Activated T-helper 1 cell treated with anti-CD3 and anti-CD28 coated beads, Interleukin-12 subunit alpha, Interleukin-12 subunit beta, Interleukin-2, Interleukin-4 antibody, amounts not matched to agents 30 ng/mL and 10 ng/mL and 1 ng/mL, durations not matched to agents 14 hours and 24 hours and 36 hours (primary cell): ENCODE measurements at regions of chr15 and their contacts with region 1.

Region 1: DNA sequence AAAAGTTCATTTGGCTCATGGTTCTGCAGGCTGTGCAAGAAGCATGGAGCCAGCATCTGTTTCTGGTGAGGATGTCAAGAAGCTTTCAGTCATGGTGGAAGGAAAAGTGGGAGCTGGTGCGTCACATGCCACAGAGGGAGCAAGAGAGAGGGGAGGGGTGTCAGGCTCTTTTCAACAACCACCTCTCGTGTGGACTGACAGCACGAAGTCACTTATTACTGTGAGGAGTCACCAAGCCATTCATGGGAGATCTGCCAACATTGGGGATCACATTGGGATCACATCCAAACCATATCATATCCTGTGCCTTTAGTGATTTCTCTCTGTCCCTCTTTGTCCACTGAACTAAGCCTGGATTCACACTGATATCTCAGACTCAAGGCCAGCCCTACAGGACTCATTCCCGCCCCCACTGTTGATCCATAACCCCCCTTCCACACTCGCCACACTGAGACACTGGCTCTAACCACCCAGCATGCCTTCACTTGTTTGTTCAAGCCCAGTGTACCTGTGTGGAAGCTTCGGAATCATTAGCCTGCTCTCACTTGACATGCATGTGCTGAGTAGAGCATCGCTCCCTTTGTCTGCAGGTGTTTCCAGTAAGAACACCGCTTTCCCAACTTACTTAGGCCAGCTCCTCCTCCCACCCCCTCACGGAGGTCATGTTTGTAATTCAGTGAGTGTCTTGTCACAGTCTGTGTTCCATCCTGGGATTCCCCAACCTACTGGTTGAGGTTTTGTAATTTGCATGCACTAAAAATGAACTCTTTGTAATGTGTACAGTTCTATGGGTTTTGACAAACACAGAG is 132.2 kb downstream of the KLF13 start:
- DNase-seq: peak; percentile 57
- H3K4me3 Mint-ChIP-seq: peak overlapping the region; percentile 53
- H3K27ac Mint-ChIP-seq: peak overlapping the region; percentile 86
- H3K4me1 Mint-ChIP-seq: peaks cover 38% of the 10 kb centered on the region
- H3K27me3 Mint-ChIP-seq: no peaks in the 10 kb centered on the region

Region 2: DNA sequence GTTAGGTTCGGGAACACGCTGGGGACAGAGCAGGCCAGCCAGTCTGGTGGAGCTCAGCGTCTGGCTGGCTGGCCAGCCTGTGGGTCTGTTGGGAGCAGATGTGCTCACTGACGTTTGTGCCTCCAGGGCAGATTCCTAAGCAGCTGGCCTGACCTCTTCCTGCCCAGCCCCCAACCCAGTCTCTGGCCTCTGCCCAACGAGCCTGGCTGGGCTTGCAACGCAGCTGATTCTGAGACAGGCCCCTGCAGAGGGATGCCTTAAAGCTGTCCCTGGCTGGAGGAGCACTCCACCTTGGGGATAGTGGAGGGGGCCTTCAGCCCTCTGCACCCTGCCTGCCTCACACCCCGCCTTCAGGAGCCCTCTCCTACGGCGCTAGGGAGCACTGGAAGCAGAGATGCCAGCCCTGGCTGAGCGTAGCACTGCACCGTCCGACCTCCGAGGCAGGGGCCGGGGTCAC is 86.1 kb before region 1 on chr15:
- intact Hi-C with region 1: no loop called
- DNase-seq: no peak
- H3K4me3 Mint-ChIP-seq: no peak overlapping the region
- H3K27ac Mint-ChIP-seq: no peak overlapping the region
- H3K4me1 Mint-ChIP-seq: peaks cover 53% of the 10 kb centered on the region
- H3K27me3 Mint-ChIP-seq: no peaks in the 10 kb centered on the region

Region 3: DNA sequence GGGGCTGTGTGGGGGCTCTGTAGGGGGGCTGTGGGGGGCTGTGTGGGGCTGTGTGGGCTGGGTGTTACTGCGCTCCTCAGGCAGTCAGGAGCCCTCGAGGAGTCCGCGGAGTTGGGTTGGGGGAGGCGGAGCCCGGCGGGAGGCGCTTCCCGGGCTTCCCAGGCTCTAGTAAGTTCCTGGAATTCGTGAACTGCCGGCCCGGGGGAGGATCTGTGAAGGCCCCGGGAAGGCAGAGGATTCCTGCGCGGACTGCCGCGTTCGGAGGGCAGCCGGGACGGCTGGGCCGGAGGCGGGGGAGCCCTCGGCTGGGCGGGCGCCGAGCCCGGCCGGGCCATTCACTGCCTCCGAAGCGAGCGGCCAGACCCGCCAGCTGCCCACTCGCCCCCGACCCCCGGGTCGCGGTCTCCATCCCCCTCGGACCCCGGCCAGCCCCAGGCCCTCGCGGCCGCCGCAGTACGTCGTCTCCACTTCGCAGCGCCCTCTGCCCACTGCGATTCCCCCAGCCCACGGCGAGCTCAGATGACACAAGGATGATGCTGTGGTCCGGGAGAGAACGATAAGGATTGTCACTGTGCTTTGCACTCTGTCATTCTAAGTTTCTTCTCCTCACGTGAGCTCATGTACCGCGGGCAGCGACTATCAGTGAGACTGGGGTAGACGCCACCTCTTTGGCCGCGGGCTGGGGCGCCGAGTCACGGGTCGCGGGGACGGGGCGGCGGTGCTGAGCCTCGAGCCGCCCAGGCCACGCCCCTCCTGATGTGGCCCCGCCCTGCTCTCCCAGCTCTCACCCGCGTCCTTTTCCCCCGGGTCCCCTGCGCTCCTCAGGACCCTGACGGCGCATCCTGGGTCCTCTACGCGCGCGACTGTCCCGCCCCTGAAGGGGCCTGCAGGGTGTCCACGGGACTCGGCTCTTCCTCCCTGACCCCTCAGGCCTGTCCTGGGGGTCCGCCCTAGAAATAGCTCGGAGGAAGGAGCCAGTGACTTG is 66.8 kb before region 1 on chr15:
- intact Hi-C with region 1: loop called (anchors 1 kb)
- DNase-seq: peak; percentile 78
- H3K4me3 Mint-ChIP-seq: peak overlapping the region; percentile 86
- H3K27ac Mint-ChIP-seq: peak overlapping the region; percentile 90
- H3K4me1 Mint-ChIP-seq: peaks cover 37% of the 10 kb centered on the region
- H3K27me3 Mint-ChIP-seq: no peaks in the 10 kb centered on the region

Region 4: DNA sequence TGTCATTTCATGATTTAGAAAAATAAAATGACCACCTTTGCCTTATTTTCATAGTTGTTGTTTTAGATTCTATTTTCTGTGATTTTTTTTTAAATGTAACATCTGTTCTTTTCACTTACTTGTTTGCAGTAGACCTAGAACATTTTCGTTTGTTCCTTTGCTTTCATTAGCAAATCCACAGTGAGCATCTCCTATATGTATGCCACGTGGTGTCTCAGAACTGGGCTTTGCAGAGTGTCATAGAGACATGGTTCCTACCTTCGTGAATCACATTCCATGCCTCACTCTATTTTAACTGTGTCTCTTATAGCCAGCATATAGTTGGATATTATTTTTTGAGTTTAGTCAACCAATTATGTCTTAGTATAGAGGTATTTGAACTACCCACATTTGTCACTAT is 14.0 kb before region 1 on chr15:
- intact Hi-C with region 1: loop called (anchors 1 kb)
- DNase-seq: no peak
- H3K4me3 Mint-ChIP-seq: no peak overlapping the region
- H3K27ac Mint-ChIP-seq: peak overlapping the region; percentile 36
- H3K4me1 Mint-ChIP-seq: peaks cover 44% of the 10 kb centered on the region
- H3K27me3 Mint-ChIP-seq: peaks cover 2% of the 10 kb centered on the region

Region 5: GRCh38 chr15:31472636-31473384 is 14.0 kb after region 1 on chr15:
- intact Hi-C with region 1: loop called (anchors 1 kb)
- DNase-seq: peak; percentile 68
- H3K4me3 Mint-ChIP-seq: peak overlapping the region; percentile 76
- H3K27ac Mint-ChIP-seq: peak overlapping the region; percentile 90
- H3K4me1 Mint-ChIP-seq: peaks cover 59% of the 10 kb centered on the region
- H3K27me3 Mint-ChIP-seq: no peaks in the 10 kb centered on the region

Region 6: DNA sequence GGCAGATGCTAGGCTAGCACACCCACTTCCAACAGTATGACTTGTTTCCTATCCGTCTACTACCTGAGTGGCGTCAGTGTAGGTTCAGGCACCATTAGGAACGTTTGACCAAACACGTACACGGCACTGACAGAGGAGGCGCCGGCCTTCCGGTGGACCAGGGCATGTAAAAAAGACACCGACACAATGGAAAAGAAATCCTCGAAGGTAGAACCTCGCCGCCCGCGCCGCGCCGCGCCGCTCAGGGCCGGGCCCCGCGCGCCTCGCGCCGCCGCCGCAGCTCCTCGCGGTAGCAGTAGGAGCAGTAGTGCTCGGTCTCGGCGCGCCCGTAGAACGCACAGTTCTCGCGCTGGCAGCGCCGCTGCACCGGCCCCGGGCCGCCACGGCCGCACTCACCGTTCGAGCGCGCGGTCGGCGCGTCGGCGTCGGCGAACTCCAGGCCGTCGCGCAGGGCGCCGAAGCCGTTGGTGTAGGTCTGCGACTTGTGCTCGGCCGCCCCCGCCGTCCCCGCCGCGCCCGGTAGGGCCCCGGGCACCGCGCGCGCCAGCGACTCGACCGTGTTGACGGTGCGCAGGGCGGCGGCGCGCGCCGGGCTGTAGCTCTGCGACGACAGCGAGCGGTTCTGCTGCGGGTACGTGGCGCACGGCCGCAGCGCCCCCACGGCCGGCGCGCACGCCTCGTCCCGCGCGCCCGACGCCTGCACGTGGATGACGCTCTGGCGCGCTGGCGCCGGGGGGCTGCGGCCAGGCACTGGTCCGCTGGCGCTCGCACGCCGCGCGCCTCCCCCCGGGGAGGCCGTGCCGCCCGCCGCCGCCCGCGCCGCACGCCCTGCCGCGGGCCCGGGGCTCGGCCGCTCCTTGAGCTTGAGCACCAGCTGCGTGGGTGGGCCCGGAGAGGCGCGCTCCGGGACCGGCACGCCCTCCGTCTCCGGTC is 24.5 kb after region 1 on chr15:
- intact Hi-C with region 1: loop called (anchors 1 kb)
- DNase-seq: peak; percentile 42
- H3K4me3 Mint-ChIP-seq: peak overlapping the region; percentile 92
- H3K27ac Mint-ChIP-seq: peak overlapping the region; percentile 99
- H3K4me1 Mint-ChIP-seq: peaks cover 64% of the 10 kb centered on the region
- H3K27me3 Mint-ChIP-seq: peaks cover 2% of the 10 kb centered on the region

Region 7: DNA sequence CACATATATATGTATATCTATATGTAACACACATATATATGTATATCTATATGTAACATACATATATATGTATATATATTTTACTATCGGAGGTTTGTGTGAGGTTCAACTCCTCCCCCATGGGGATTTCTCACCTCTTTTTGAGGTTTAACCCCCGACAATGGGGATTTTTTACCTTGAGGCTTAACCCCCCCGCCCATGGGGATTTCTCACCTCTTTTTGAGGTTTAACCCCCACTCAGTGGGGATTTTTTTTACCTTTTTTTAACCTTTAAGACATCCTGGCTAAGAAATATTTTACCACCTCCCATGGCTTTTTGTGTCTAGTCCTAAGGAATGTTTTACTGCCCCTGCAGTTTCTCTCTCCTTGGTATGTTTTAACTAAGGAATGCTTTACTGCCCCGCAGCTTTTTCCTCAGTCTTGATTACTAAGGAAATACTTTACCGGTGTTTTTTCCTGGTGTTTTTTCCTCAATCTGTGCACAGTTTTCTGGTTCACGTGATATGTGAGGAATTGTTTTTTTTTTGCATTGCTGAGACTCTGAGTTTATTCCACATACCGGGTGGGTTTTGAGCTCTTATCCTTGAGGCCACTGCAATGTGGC is 53.0 kb after region 1 on chr15:
- intact Hi-C with region 1: loop called (anchors 1 kb)
- DNase-seq: peak; percentile 69
- H3K4me3 Mint-ChIP-seq: peak overlapping the region; percentile 68
- H3K27ac Mint-ChIP-seq: peak overlapping the region; percentile 55
- H3K4me1 Mint-ChIP-seq: peaks cover 72% of the 10 kb centered on the region
- H3K27me3 Mint-ChIP-seq: peaks cover 5% of the 10 kb centered on the region